OCI-LY7 (cell line): ENCODE measurements at regions of chr3 and their contacts with region 1.

Region 1: DNA sequence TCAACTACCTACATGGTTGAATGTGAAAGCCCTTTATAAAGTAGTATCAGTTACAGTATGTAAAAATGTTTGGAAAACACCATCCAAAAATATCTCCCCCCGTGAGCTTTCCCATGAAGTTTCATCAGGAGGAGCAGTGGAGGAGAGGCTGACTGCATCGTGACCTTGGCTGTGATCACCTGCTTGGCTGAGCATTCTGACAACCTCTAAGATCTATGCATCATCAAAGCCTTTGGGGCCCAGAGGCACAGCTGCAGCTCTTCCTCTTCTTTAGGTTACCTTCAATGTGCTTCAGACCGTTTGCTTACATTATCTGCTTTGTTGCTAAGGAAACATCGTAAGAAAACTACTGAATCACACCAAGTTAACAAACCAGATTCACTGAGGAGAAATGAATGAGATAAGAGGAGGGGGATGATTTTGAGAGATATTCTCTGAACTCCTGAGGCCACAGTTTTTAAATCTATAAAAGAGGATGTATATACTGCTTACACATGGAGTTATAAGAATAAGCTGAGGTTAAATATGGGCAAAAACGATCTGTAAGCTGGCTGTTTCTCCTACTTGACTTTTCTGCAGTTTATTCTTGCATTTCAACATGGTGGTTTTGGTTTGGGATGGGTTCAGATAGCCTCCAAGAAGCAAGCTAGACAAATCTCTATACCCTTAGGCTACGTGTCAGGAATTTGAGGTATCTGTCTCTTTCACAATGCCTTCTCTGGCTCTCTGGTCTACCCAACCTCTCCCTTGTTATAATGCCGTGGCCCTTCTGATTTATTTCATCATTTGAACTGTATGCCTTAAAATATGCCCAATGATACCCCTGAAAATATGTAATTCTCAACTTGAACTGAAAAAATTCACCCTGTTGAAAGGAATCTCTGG is 4.0 kb downstream of the GCSAM start:
- DNase-seq: peak; percentile 96
- H3K4me3 ChIP-seq: peak overlapping the region; percentile 86
- H3K27ac ChIP-seq: peak overlapping the region; percentile 99
- H3K4me1 ChIP-seq: peaks cover 80% of the 10 kb centered on the region
- CTCF ChIP-seq: no peak

Region 2: DNA sequence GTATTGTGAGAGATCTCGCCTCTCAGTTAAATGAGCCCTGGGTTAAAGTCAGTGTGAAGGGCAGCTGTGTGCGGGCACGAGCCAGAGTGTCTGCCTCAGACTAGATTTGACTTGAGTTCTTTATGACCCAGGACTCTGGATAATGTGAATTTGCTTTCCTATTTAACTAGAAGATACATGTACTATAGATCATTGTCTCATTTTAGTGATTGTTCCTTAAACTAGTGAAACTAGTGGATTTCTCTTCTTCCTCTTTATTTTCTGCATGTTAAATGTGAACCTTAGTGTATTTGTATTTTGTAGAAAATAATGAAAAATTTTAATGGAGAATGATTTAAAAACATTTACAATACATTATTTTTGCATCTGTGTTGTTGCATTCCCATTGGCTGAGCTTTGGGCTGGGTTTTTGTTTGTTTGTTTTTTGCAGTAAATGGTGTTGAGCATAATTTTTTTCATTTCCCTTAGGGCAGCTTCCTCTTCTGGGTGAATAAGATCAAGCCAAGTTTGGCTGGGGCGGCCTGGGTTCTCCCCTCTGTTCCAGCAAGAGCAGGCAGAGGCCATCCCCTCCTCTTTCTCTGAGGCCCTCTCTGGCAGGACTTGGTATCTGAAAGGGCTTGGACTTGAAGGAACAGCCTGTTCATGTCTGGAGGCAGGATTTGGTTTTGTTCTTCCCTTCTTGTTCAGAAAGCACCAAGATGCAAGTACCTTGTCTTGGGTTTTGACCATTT is 11.1 kb before region 1 on chr3:
- CTCF ChIA-PET with region 1: interaction called, 10 read pairs
- POLR2A ChIA-PET with region 1: interaction called, 566 read pairs
- intact Hi-C with region 1: loop called (anchors 1 kb)
- DNase-seq: peak; percentile 84
- H3K4me3 ChIP-seq: peak overlapping the region; percentile 13
- H3K27ac ChIP-seq: peak overlapping the region; percentile 99
- H3K4me1 ChIP-seq: peaks cover 99% of the 10 kb centered on the region
- CTCF ChIP-seq: peak; percentile 53